Posterior vena cava (tissue), 2 donors: ENCODE measurements at regions of chr3 and their contacts with region 1.

Region 1: DNA sequence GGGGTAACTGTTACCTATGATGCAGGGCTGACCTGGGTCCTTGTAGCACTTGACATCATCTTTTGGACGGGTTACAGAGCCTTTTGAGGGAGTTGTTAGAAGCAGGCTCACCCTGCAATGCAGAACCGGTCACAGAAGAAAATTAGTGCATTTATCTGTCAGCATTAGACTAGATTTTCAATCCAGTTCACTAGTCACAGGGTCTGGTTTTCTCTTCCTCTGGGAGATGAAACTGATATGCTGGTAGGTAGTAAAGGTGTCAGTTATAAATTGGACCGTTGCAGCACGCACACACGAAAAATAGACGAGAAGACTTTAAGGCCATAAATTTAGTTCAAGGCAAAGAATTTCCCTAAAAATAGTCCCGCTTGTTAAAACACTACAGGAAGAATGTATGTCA is 532.3 kb upstream of the ATP11B start:
- DNase-seq: no peak

Region 2: DNA sequence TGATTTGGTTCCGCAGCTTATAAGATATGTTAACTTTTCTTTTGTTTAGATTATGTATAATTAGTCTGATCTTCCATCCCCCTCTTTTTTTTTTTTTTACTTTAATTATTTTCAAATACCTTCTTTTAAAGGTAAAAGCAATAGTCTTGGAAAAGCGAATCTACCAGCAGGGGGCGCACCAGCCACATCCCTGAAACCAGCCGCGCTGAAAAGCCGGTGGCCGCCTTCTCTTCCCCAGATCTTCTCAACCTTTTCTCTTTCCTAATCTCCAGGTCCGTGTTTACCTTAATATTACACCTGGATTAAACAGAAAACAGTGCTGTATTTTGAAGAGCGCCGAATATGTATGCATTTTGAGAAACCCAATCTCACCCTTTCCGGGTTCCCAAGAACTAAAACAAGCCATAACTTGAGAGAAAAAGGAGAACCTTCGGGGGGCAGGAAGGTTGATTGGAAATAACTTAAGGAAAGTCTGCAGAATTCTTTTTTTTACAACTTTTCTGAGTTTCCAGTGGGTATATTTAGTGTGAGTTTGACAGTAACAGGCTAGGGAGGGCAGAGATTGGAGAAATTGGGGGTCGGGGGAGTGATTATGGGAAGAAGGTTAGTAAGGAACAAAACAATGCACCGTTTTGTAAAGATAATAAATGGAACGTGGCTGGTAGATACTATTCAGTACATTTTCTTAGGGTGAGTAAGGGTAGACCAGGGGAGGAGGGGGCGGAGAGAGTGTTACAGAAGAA is 551.3 kb before region 1 on chr3:
- intact Hi-C with region 1: loop called in 1 of 2 experiments (anchors 10 kb)
- DNase-seq: peak; percentile 89